ENCODE measurements at regions of chr3 and their contacts with region 1.

Region 1: GRCh38 chr3:151439652-151440129 is 21.2 kb downstream of the IGSF10 start:
- DNase-seq: peak; percentile 67
- H3K4me3 Mint-ChIP-seq: no peak overlapping the region
- H3K27ac Mint-ChIP-seq: no peak overlapping the region
- H3K4me1 Mint-ChIP-seq: no peaks in the 10 kb centered on the region
- H3K27me3 Mint-ChIP-seq: no peaks in the 10 kb centered on the region
- CTCF ChIP-seq: peak; percentile 42

Region 2: DNA sequence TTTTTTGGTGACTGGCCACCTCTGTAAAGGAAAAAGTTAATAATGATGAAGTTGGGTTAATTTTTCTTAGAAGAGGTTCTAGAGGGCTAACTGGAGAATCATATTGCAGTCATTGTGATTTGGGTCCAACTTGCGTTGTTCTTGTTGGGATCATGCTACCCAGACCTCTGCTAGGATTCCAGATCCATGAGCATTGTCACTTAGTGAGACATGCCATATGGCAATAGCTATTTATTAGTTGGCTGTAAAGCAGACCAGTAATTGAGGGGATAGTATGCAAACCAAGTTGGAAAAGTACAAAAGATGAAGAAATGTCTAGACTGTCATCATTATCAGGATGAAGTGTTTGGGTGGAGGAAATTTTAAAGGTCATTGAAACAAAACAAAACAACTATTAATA is 24.4 kb before region 1 on chr3:
- CTCF ChIA-PET with region 1: no interaction called
- POLR2A ChIA-PET with region 1: no interaction called
- intact Hi-C with region 1: no loop called
- DNase-seq: no peak
- H3K4me3 Mint-ChIP-seq: no peak overlapping the region
- H3K27ac Mint-ChIP-seq: no peak overlapping the region
- H3K4me1 Mint-ChIP-seq: no peaks in the 10 kb centered on the region
- H3K27me3 Mint-ChIP-seq: no peaks in the 10 kb centered on the region
- CTCF ChIP-seq: no peak

Region 3: DNA sequence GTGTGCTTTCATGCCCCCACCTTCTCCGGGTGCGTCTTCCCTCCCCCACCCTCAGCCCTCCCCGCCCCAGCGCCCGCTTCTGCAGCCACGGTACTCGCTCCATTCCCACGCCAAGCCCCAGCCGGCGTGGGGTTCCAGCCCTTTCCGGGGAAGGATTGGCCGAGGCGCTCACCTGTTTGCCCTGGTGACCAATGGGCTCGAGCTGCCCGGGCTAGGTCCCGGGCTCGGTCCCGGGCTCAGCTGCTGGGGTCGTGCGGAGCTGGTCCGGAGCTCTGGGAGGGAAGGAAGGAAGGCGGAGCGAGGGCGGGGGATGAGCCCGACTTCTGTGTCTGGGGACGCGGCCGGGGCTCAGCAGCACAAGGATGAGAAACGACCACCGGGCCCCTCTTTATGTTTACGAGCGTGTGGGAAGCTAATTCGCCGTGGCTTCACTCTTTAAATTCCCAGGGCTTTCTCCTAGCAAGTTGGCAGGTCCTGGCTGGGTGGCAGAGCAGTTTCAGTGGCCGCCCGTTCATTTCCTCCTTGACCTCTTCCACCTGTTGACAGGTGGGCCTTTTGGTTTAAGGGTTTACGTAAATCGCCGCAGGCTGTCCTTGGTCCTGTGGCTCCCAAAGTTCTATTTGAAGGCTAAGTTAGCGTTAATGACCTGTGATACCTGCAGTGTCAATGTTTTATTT is 21.2 kb after region 1 on chr3 and contains the start of gene IGSF10:
- CTCF ChIA-PET with region 1: interaction called, 19 read pairs
- POLR2A ChIA-PET with region 1: interaction called, 3 read pairs
- intact Hi-C with region 1: no loop called
- DNase-seq: no peak
- H3K4me3 Mint-ChIP-seq: peak within 1 kb of the TSS; percentile 15
- H3K27ac Mint-ChIP-seq: no peak within 1 kb of the TSS
- H3K4me1 Mint-ChIP-seq: peaks cover 5% of the 10 kb centered on the region
- H3K27me3 Mint-ChIP-seq: peaks cover 32% of the 10 kb centered on the region
- CTCF ChIP-seq: no peak
- total RNA-seq, gene IGSF10: not detected in 2 replicates

Region 4: DNA sequence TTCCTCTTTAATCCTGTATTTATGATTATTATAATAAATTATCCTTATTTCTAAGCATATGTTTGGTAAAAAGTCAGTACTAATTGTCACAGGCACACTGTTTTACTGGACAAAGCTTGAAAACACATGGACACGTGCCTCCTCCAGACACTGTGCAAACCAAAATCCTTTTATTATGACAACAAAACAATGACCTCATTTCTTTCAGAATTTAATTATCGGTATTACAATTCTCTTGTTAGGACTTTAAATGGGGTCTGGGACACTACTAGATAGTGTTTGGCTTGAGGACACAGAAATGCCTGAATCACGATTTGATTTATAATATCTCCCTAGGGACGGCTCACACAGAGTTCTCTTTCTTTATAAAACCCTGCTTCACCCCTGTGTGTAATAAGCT is 128.5 kb after region 1 on chr3:
- CTCF ChIA-PET with region 1: no interaction called
- POLR2A ChIA-PET with region 1: no interaction called
- intact Hi-C with region 1: no loop called
- DNase-seq: no peak
- H3K4me3 Mint-ChIP-seq: no peak overlapping the region
- H3K27ac Mint-ChIP-seq: no peak overlapping the region
- H3K4me1 Mint-ChIP-seq: no peaks in the 10 kb centered on the region
- H3K27me3 Mint-ChIP-seq: no peaks in the 10 kb centered on the region
- CTCF ChIP-seq: no peak

Region 5: DNA sequence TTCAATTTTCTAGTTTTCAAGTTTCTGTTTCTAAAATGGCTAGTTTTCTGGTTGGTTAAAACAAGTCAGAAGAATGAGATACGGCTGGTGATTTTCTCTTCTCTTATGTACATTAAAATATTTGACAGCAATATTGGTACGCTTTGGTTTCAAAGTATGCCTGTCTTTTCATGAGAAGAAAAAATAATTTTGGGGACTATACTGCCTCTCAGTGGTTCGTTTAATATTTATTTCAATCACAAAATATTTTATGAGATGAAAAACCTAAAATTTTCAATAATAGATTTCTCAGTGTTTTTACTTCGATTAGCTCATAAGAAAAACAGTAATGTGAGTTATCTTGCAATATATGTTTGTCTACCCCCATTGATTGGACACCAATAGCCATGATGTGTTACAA is 221.2 kb after region 1 on chr3:
- CTCF ChIA-PET with region 1: interaction called, 8 read pairs
- POLR2A ChIA-PET with region 1: no interaction called
- intact Hi-C with region 1: loop called (anchors 1 kb)
- DNase-seq: peak; percentile 13
- H3K4me3 Mint-ChIP-seq: no peak overlapping the region
- H3K27ac Mint-ChIP-seq: no peak overlapping the region
- H3K4me1 Mint-ChIP-seq: no peaks in the 10 kb centered on the region
- H3K27me3 Mint-ChIP-seq: no peaks in the 10 kb centered on the region
- CTCF ChIP-seq: peak; percentile 7

Region 6: GRCh38 chr3:151918253-151919029 is 478.8 kb after region 1 on chr3:
- CTCF ChIA-PET with region 1: interaction called, 38 read pairs
- POLR2A ChIA-PET with region 1: interaction called, 5 read pairs
- intact Hi-C with region 1: loop called (anchors 1 kb)
- DNase-seq: peak; percentile 50
- H3K4me3 Mint-ChIP-seq: no peak overlapping the region
- H3K27ac Mint-ChIP-seq: no peak overlapping the region
- H3K4me1 Mint-ChIP-seq: no peaks in the 10 kb centered on the region
- H3K27me3 Mint-ChIP-seq: no peaks in the 10 kb centered on the region
- CTCF ChIP-seq: peak; percentile 70

Region 7: GRCh38 chr3:152524198-152525140 is 1084.8 kb after region 1 on chr3:
- CTCF ChIA-PET with region 1: interaction called, 3 read pairs
- POLR2A ChIA-PET with region 1: no interaction called
- intact Hi-C with region 1: loop called (anchors 1 kb)
- DNase-seq: peak; percentile 69
- H3K4me3 Mint-ChIP-seq: no peak overlapping the region
- H3K27ac Mint-ChIP-seq: no peak overlapping the region
- H3K4me1 Mint-ChIP-seq: no peaks in the 10 kb centered on the region
- H3K27me3 Mint-ChIP-seq: no peaks in the 10 kb centered on the region
- CTCF ChIP-seq: peak; percentile 66